ENCODE measurements at regions of chr1 and their contacts with region 1.

Region 1: DNA sequence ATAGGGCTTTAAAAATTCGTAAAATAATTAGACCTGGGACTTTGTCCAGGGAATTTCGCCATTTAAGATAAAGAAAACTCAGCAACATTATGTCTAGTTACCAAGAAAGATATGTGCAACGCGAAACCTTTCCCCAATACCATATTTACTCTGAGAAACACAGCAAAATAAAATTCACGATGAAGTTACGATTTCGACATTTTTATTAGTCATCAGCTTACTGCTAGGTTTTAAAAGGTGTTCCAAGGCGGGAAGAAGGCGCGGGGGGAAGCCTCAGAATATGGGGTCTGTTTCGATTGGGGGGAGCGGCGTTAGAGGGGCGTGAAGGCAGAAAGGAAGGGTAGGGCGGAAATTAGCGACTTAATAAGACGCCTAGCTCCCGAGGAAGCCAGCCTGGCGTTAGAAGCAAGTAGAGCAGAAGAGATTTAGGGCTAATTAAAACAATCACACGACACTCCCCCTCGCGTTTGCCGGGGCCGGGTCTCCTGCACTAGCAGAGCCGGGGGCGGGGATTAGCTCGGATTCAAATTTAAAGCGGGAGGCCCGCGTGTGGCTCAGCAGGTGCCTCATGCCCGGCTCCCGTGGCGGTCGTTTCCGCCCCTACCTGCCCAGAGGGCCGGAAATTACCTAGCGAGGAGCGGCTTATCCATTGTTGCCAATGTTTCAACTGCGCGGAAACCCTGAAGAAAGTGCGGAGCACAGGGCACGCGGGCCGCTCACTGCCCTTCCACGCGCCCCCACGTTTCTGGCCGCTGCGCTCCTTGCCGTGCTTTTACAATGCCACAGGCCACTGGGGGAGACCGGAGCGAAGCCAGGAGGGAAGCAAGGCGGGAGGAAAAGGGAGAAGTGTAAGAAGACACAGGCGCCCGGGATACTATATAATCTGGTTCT is 795 bp upstream of the POU2F1 start:
- DNase-seq: peak; percentile 95
- H3K4me3 ChIP-seq: peak overlapping the region; percentile 79
- H3K27ac ChIP-seq: peak overlapping the region; percentile 92
- H3K4me1 ChIP-seq: no peaks in the 10 kb centered on the region
- H3K27me3 ChIP-seq: no peaks in the 10 kb centered on the region
- CTCF ChIP-seq: no peak

Region 2: GRCh38 chr1:167121375-167122120 is 98.3 kb before region 1 on chr1:
- intact Hi-C with region 1: loop called (anchors 10 kb)
- DNase-seq: peak; percentile 85
- H3K4me3 ChIP-seq: peak overlapping the region; percentile 32
- H3K27ac ChIP-seq: peak overlapping the region; percentile 64
- H3K4me1 ChIP-seq: no peaks in the 10 kb centered on the region
- H3K27me3 ChIP-seq: no peaks in the 10 kb centered on the region
- CTCF ChIP-seq: no peak

Region 3: GRCh38 chr1:167499664-167500101 is 279.8 kb after region 1 on chr1:
- intact Hi-C with region 1: no loop called
- DNase-seq: no peak
- H3K4me3 ChIP-seq: no peak overlapping the region
- H3K27ac ChIP-seq: no peak overlapping the region
- H3K4me1 ChIP-seq: no peaks in the 10 kb centered on the region
- H3K27me3 ChIP-seq: no peaks in the 10 kb centered on the region
- CTCF ChIP-seq: no peak

Measured in colonic mucosa (tissue), 4 donors.